H1 (cell line): ENCODE measurements at regions of chr12 and their contacts with region 1.

Region 1: GRCh38 chr12:3491938-3492792 is 1.2 kb downstream of the PRMT8 start:
- DNase-seq: peak; percentile 51 to 86
- H3K4me3 ChIP-seq: peak overlapping the region; percentile 57 to 76 (median 64)
- H3K27ac ChIP-seq: no peak overlapping the region
- H3K4me1 ChIP-seq: peaks cover 9 to 30% (median 14%) of the 10 kb centered on the region in 4 experiments
- H3K27me3 ChIP-seq: peaks cover 39 to 69% (median 61%) of the 10 kb centered on the region in 4 experiments
- CTCF ChIP-seq: peak in 1 of 3 experiments; percentile 15; a peak in 1 of 4 replicates
- EP300 ChIP-seq: peak in 1 of 2 experiments; percentile 13; a peak in 1 of 3 replicates
- POLR2A ChIP-seq: no peak
- RAD21 ChIP-seq: peak; percentile 25 to 27; a peak in 2 of 4 replicates

Region 2: DNA sequence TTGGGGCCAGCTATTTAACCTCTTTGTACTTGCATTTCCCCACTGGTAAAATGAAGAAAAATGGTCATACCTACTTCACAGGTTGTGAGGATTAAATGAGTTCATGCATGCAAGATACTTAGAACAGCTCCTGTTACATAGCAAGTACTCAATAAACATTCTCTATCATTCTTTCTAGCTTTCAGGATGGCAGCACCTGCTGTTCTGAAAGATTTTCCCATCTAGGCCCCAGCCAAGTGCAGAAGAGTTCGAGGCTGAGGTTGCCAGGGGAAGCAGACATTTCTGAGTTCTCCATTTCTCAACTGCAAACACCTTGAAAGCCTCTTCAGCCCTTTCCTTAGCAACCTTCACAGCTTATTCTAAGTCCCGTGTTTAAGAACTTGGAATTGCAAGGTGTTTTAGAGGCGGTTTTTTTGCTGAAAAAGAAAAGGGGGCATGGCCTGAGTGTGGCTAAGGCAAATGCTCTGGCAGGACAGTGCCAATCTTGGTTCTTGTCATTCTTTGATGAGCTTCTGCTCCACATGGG is 74.2 kb before region 1 on chr12:
- CTCF ChIA-PET with region 1: no interaction called
- POLR2A ChIA-PET with region 1: no interaction called
- DNase-seq: no peak
- H3K4me3 ChIP-seq: no peak overlapping the region
- H3K27ac ChIP-seq: no peak overlapping the region
- H3K4me1 ChIP-seq: peaks cover 8 to 17% (median 11%) of the 10 kb centered on the region in 4 experiments
- H3K27me3 ChIP-seq: peaks cover 1 to 9% (median 6%) of the 10 kb centered on the region in 4 experiments; a peak in 5 of 7 replicates
- CTCF ChIP-seq: no peak
- EP300 ChIP-seq: no peak
- POLR2A ChIP-seq: no peak
- RAD21 ChIP-seq: no peak

Region 3: GRCh38 chr12:3507361-3507760 is 15.2 kb after region 1 on chr12:
- CTCF ChIA-PET with region 1: interaction called, 36 read pairs
- POLR2A ChIA-PET with region 1: interaction called, 16 read pairs
- DNase-seq: no peak
- H3K4me3 ChIP-seq: no peak overlapping the region
- H3K27ac ChIP-seq: no peak overlapping the region
- H3K4me1 ChIP-seq: no peaks in the 10 kb centered on the region; a peak in 1 of 7 replicates
- H3K27me3 ChIP-seq: peaks cover 0 to 7% (median 0%) of the 10 kb centered on the region in 4 experiments; a peak in 1 of 7 replicates
- CTCF ChIP-seq: no peak
- EP300 ChIP-seq: no peak
- POLR2A ChIP-seq: no peak
- RAD21 ChIP-seq: no peak